Heart right ventricle (tissue), 16 donors: ENCODE measurements at regions of chr1 and their contacts with region 1.

Region 1: DNA sequence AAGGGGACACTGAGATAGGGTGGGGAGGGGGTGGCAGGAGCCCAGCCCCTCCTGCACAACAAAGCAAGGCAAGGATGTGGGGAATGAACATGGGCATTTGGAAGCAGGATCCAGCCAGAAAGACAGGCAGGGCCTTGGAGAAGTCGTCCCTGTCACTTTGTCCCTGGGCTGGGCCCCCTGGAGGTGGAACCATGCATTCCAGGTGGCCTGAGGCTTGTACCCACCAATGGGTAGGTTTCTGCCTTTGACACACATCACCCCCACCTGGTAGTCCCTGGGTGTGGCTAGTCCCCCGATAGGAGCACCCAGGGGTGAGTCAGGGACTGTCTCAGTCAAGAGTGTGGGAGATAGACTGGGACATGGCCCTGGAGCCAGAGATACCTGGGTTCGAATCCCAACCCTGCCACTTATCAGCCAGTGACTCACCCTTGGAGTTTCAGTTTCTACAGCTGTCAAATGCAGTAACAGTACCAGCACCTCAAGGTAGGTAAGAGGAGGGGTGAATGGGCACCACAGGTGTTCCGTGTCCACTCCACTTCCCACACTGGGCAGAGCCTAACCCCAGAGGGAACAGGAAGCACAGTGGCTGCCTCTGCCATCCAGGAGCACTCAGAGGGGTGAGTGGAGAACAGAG is 10.0 kb downstream of the PLA2G2D start:
- DNase-seq: no peak
- ATAC-seq: no peak
- H3K4me3 ChIP-seq: no peak overlapping the region
- H3K27ac ChIP-seq: no peak overlapping the region
- H3K4me1 ChIP-seq: peaks cover 0 to 13% (median 0%) of the 10 kb centered on the region in 9 donors
- H3K27me3 ChIP-seq: peaks cover 0 to 16% (median 4%) of the 10 kb centered on the region in 7 donors
- CTCF ChIP-seq: no peak

Region 2: GRCh38 chr1:20142001-20142710 is 32.8 kb after region 1 on chr1:
- intact Hi-C with region 1: loop called in 2 of 10 experiments (anchors 5 kb)
- DNase-seq: no peak
- ATAC-seq: no peak
- H3K4me3 ChIP-seq: no peak overlapping the region
- H3K27ac ChIP-seq: no peak overlapping the region
- H3K4me1 ChIP-seq: peaks cover 0 to 6% (median 0%) of the 10 kb centered on the region in 9 donors
- H3K27me3 ChIP-seq: peaks cover 0 to 9% (median 0%) of the 10 kb centered on the region in 7 donors
- CTCF ChIP-seq: no peak

Region 3: GRCh38 chr1:20151906-20152598 is 42.7 kb after region 1 on chr1:
- intact Hi-C with region 1: loop called in 5 of 10 experiments (anchors 5 kb)
- DNase-seq: peak; percentile 83 to 87
- ATAC-seq: peak; percentile 89 to 96 (median 93)
- H3K4me3 ChIP-seq: peak overlapping the region; percentile 1 to 53 (median 44)
- H3K27ac ChIP-seq: peak overlapping the region in 4 of 10 donors; percentile 29 to 73 (median 48)
- H3K4me1 ChIP-seq: peaks cover 3 to 27% (median 15%) of the 10 kb centered on the region in 9 donors
- H3K27me3 ChIP-seq: peaks cover 0 to 20% (median 0%) of the 10 kb centered on the region in 7 donors
- CTCF ChIP-seq: peak; percentile 91 to 97 (median 95)